Activated CD4-positive, alpha-beta memory T cell treated with anti-CD3 and anti-CD28 coated beads for 36 hours (primary cell): ENCODE measurements at regions of chr17 and their contacts with region 1.

Region 1: DNA sequence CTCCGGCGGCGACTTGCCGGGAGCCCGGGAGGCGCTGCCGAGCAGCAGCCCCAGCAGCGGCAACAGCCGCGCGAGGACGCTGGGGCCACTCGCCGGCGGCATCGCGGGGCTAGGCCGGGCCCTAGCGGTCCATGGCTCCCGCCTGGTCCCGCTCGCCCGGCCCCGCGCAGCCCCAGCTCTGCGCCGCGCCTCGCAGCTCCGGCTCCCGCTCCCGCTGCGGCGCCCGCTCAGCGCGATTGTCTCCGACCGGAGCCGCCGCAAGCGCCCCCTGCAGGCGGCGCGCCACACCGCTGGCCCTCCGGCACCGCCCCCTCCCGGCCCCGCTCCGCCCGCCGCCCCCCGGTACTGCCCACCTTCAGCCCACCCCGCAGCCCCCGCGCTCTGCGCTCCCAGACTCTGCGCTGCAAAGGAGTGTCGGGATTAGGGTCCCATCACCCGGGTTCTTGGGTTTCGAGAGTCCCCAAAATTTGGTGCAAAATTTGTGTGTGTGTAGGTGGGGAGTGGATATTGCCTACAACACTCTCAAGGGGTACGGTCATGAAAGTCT is at the start of gene FAM171A2:
- DNase-seq: peak; percentile 74
- H3K4me3 Mint-ChIP-seq: peak within 1 kb of the TSS; percentile 61
- H3K27ac Mint-ChIP-seq: no peak within 1 kb of the TSS
- H3K4me1 Mint-ChIP-seq: peaks cover 4% of the 10 kb centered on the region
- H3K27me3 Mint-ChIP-seq: peaks cover 15% of the 10 kb centered on the region
- total RNA-seq, gene FAM171A2: 0.19 to 0.21 TPM

Region 2: GRCh38 chr17:44344939-44345453 is 18.7 kb before region 1 on chr17 and contains the start of gene GRN:
- CTCF ChIA-PET with region 1: interaction called, 18 read pairs
- POLR2A ChIA-PET with region 1: no interaction called
- intact Hi-C with region 1: no loop called
- DNase-seq: peak; percentile 93
- H3K4me3 Mint-ChIP-seq: peak within 1 kb of the TSS; percentile 82
- H3K27ac Mint-ChIP-seq: peak within 1 kb of the TSS; percentile 66
- H3K4me1 Mint-ChIP-seq: peaks cover 21% of the 10 kb centered on the region
- H3K27me3 Mint-ChIP-seq: no peaks in the 10 kb centered on the region
- total RNA-seq, gene GRN: 59.7 to 62.4 TPM

Region 3: DNA sequence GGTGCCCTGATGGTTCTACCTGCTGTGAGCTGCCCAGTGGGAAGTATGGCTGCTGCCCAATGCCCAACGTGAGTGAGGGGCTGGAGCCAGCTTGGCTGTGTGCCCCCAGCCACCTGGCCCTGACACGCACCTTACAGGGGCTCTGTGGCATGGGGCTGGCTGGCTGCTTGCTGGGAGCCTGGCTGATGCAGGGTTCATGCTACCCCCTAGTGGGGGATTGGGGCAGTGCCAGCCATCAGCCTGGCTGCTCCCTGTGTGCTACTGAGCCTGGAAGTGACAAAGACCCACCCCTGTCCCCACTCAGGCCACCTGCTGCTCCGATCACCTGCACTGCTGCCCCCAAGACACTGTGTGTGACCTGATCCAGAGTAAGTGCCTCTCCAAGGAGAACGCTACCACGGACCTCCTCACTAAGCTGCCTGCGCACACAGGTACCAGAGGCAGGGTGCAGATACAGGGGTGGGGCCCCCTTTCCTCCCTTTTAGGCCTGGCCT is 12.9 kb before region 1 on chr17:
- CTCF ChIA-PET with region 1: interaction called, 18 read pairs
- POLR2A ChIA-PET with region 1: no interaction called
- intact Hi-C with region 1: no loop called
- DNase-seq: peak; percentile 81
- H3K4me3 Mint-ChIP-seq: no peak overlapping the region
- H3K27ac Mint-ChIP-seq: no peak overlapping the region
- H3K4me1 Mint-ChIP-seq: peaks cover 17% of the 10 kb centered on the region
- H3K27me3 Mint-ChIP-seq: no peaks in the 10 kb centered on the region

Region 4: GRCh38 chr17:44376124-44376523 is 12.4 kb after region 1 on chr17:
- CTCF ChIA-PET with region 1: interaction called, 13 read pairs
- POLR2A ChIA-PET with region 1: no interaction called
- intact Hi-C with region 1: no loop called
- DNase-seq: peak; percentile 40
- H3K4me3 Mint-ChIP-seq: no peak overlapping the region
- H3K27ac Mint-ChIP-seq: no peak overlapping the region
- H3K4me1 Mint-ChIP-seq: no peaks in the 10 kb centered on the region
- H3K27me3 Mint-ChIP-seq: peaks cover 16% of the 10 kb centered on the region

Region 5: GRCh38 chr17:44385287-44386181 is 21.8 kb after region 1 on chr17:
- CTCF ChIA-PET with region 1: interaction called, 11 read pairs
- POLR2A ChIA-PET with region 1: interaction called, 3 read pairs
- intact Hi-C with region 1: no loop called
- DNase-seq: peak; percentile 95
- H3K4me3 Mint-ChIP-seq: peak overlapping the region; percentile 58
- H3K27ac Mint-ChIP-seq: no peak overlapping the region
- H3K4me1 Mint-ChIP-seq: peaks cover 10% of the 10 kb centered on the region
- H3K27me3 Mint-ChIP-seq: peaks cover 18% of the 10 kb centered on the region

Region 6: GRCh38 chr17:44522883-44523671 is 159.4 kb after region 1 on chr17:
- CTCF ChIA-PET with region 1: interaction called, 11 read pairs
- POLR2A ChIA-PET with region 1: no interaction called
- intact Hi-C with region 1: loop called (anchors 2 kb)
- DNase-seq: peak; percentile 82
- H3K4me3 Mint-ChIP-seq: no peak overlapping the region
- H3K27ac Mint-ChIP-seq: no peak overlapping the region
- H3K4me1 Mint-ChIP-seq: no peaks in the 10 kb centered on the region
- H3K27me3 Mint-ChIP-seq: peaks cover 12% of the 10 kb centered on the region